ENCODE measurements at regions of chr12 and their contacts with region 1.

Region 1: GRCh38 chr12:1795785-1796514 is 24.4 kb upstream of the LRTM2 start:
- DNase-seq: peak; percentile 98
- H3K4me3 ChIP-seq: no peak overlapping the region
- H3K27ac ChIP-seq: peak overlapping the region in 1 of 2 experiments; percentile 34; a peak in 1 of 4 replicates
- H3K4me1 ChIP-seq: peaks cover 0 to 29% of the 10 kb centered on the region in 2 experiments; a peak in 1 of 4 replicates
- H3K27me3 ChIP-seq: no peaks in the 10 kb centered on the region
- CTCF ChIP-seq: peak; percentile 88
- EP300 ChIP-seq: no peak
- RAD21 ChIP-seq: peak; percentile 98

Region 2: DNA sequence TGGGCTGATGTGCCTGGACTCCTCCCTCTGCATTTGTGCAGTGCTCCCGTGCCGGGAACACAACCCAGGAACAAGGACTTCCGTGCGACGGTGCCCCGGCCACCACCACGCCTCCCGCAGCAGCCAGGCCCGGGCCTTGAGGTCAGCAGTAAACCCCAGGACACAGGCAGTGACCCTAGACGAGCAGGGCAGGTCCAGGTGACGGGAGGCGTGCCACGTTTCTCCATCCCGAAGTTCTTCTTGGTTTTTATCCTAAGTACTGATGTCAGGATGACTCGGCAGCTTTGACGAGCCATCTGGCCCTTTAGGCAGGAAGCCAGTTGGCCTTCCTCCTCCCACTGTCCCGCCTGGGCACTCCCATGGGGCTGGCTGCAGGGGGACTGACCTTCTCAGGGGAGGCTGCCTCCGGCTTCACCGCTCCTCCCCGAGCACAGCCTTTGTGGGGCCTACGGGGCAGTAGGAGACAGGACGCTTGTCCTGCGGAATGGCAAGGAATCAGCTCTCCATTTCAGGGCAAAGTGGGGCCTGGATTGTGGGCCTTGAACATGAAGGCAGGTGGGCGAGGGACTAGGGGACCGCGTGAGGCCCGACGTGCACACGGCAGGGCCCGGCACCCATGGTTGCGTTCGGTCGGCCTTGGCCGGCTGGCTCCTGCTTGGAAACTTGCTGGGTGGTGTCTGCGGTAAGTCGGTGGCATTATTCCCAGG is 295.7 kb before region 1 on chr12:
- CTCF ChIA-PET with region 1: no interaction called
- POLR2A ChIA-PET with region 1: no interaction called
- DNase-seq: no peak
- H3K4me3 ChIP-seq: no peak overlapping the region
- H3K27ac ChIP-seq: no peak overlapping the region
- H3K4me1 ChIP-seq: peaks cover 0 to 5% of the 10 kb centered on the region in 2 experiments; a peak in 1 of 4 replicates
- H3K27me3 ChIP-seq: no peaks in the 10 kb centered on the region
- CTCF ChIP-seq: no peak
- EP300 ChIP-seq: no peak
- RAD21 ChIP-seq: no peak

Region 3: DNA sequence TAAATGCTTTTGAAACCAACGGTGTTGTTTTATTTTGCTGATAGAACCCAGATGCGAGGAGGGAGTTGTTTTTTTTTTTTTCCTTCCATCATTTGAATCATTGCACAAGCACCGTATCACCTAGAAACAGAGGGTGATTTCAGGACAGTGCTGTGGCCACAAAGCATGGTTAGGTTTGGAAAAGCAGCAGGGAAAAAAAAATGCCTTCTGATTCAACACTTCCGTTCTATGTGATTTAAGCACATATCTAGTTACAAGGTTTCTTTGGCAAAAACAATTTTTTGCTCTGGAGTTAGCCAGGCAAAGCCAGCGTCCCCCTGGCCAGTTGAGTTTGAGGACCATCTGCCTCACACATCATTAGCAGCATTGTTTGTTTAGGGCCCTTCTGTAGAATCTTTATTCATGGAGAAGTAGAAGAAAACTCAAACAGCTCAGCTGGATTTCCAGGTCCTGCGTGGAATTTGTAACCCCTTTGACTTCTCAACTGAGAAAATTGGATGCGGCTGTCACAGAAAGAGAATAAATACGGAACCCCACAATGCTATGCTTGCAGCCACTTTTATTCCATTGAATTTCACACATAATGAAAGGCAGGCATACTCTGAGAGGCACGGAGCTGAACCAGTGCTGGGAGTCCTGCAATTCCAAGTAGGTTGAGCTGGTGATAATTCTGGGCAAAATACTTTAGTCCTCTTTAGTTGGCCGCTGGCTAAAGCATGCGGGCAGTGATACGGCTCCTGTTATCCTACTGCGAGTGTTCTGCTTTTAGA is 184.0 kb before region 1 on chr12:
- CTCF ChIA-PET with region 1: no interaction called
- POLR2A ChIA-PET with region 1: no interaction called
- DNase-seq: no peak
- H3K4me3 ChIP-seq: no peak overlapping the region
- H3K27ac ChIP-seq: peak overlapping the region; percentile 70 to 72; a peak in 3 of 4 replicates
- H3K4me1 ChIP-seq: peaks cover 0 to 34% of the 10 kb centered on the region in 2 experiments; a peak in 3 of 4 replicates
- H3K27me3 ChIP-seq: no peaks in the 10 kb centered on the region
- CTCF ChIP-seq: no peak
- EP300 ChIP-seq: peak; percentile 16 to 40; a peak in 2 of 4 replicates
- RAD21 ChIP-seq: no peak

Region 4: GRCh38 chr12:1634590-1635191 is 161.3 kb before region 1 on chr12:
- CTCF ChIA-PET with region 1: interaction called, 166 read pairs
- POLR2A ChIA-PET with region 1: interaction called, 3 read pairs
- DNase-seq: peak; percentile 83
- H3K4me3 ChIP-seq: peak overlapping the region in 1 of 2 experiments; percentile 37; a peak in 1 of 4 replicates
- H3K27ac ChIP-seq: no peak overlapping the region
- H3K4me1 ChIP-seq: peaks cover 0 to 10% of the 10 kb centered on the region in 2 experiments; a peak in 2 of 4 replicates
- H3K27me3 ChIP-seq: no peaks in the 10 kb centered on the region
- CTCF ChIP-seq: peak; percentile 84
- EP300 ChIP-seq: no peak
- RAD21 ChIP-seq: peak; percentile 84

Region 5: DNA sequence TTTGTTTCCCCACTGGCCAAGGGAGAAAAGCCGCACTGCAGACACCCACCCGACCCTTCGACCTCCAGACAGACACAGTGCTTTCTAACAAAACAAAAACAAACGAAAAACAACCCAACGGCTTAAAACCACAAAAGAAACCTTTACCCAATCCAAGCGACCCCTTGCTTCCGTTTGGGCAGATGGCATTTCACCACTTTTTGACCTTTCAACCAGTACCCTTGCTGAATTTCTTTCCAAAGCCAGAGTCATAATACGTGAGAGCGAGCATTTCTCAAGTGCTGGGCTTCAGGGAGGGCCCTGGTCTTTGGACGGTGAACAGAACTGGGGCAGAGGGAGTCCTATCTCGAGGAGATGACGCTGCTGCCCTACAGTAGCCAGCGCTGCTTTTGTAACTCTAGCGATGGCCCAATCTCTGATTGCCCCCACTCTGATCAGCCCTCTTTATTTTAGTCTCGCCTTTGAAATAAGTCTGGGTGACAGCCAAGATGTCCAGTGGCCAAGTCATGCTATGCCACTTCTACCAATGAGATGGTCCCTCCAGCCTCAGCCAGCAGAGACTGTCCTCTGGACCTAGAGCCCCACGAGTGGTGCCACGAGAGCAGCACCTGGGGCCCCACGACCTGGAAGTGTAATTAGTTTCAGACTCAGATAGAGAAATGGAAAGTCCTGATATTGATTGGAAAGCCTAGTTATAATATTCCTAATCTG is 127.0 kb before region 1 on chr12:
- CTCF ChIA-PET with region 1: interaction called, 16 read pairs
- POLR2A ChIA-PET with region 1: no interaction called
- DNase-seq: no peak
- H3K4me3 ChIP-seq: no peak overlapping the region
- H3K27ac ChIP-seq: no peak overlapping the region
- H3K4me1 ChIP-seq: no peaks in the 10 kb centered on the region
- H3K27me3 ChIP-seq: no peaks in the 10 kb centered on the region
- CTCF ChIP-seq: no peak
- EP300 ChIP-seq: no peak
- RAD21 ChIP-seq: no peak

Region 6: DNA sequence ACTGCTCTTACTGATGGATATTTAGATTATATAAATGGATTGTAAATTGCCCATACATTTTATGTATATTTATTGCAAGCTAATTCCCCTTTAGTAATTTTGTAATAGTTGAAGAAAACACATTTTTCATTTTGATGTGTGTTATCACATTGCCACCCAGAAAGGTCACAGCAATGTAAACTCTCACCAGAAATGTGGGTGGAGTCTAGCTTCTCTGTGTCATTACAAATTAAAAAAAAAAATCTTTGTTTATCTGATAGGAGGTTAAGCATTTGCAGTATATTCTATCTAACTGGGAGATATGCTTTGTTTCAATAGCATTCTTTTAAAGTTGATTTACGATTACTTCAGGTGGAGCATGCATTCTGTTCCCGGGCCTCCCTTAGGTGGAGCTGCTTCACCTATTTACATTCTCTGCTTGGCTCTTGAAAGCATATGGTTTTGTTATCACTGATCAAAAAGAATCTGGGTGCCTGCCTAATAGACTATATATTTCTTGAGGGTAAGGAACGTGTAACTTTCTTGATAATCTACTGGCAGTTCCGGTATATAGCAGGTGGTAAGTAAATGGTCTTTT is 97.2 kb before region 1 on chr12:
- CTCF ChIA-PET with region 1: interaction called, 25 read pairs
- POLR2A ChIA-PET with region 1: no interaction called
- DNase-seq: no peak
- H3K4me3 ChIP-seq: no peak overlapping the region
- H3K27ac ChIP-seq: no peak overlapping the region
- H3K4me1 ChIP-seq: no peaks in the 10 kb centered on the region; a peak in 1 of 4 replicates
- H3K27me3 ChIP-seq: no peaks in the 10 kb centered on the region
- CTCF ChIP-seq: no peak
- EP300 ChIP-seq: no peak
- RAD21 ChIP-seq: peak; percentile 47

Region 7: DNA sequence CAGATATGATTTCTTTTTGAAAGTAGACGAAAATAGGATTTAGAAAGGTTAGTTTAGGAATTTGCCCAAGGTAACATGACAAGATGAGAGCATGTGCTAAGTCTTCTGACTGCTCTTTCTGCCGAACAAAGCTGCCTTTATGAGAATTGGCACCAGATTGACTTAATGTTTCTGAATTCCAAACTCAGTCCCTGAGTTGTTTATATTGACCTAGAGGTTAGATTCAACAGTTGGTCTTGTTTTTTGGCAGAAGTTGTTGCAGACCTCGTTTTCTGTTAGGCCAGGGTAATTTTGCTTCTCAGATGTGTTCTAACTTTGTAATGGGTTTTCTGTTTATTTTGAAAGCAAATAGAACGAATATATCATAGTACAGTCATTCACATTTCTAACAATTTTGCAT is 37.1 kb before region 1 on chr12:
- CTCF ChIA-PET with region 1: interaction called, 14 read pairs
- POLR2A ChIA-PET with region 1: no interaction called
- DNase-seq: no peak
- H3K4me3 ChIP-seq: no peak overlapping the region
- H3K27ac ChIP-seq: no peak overlapping the region
- H3K4me1 ChIP-seq: no peaks in the 10 kb centered on the region; a peak in 1 of 4 replicates
- H3K27me3 ChIP-seq: no peaks in the 10 kb centered on the region
- CTCF ChIP-seq: no peak
- EP300 ChIP-seq: no peak
- RAD21 ChIP-seq: no peak

Region 8: GRCh38 chr12:1781772-1782171 is 14.2 kb before region 1 on chr12:
- CTCF ChIA-PET with region 1: interaction called, 38 read pairs
- POLR2A ChIA-PET with region 1: no interaction called
- DNase-seq: no peak
- H3K4me3 ChIP-seq: no peak overlapping the region
- H3K27ac ChIP-seq: no peak overlapping the region
- H3K4me1 ChIP-seq: peaks cover 4 to 29% of the 10 kb centered on the region in 2 experiments; a peak in 2 of 4 replicates
- H3K27me3 ChIP-seq: no peaks in the 10 kb centered on the region
- CTCF ChIP-seq: no peak
- EP300 ChIP-seq: no peak
- RAD21 ChIP-seq: no peak

Measured in SK-N-SH (cell line).